ENCODE measurements at regions of chr4 and their contacts with region 1.

Region 1: DNA sequence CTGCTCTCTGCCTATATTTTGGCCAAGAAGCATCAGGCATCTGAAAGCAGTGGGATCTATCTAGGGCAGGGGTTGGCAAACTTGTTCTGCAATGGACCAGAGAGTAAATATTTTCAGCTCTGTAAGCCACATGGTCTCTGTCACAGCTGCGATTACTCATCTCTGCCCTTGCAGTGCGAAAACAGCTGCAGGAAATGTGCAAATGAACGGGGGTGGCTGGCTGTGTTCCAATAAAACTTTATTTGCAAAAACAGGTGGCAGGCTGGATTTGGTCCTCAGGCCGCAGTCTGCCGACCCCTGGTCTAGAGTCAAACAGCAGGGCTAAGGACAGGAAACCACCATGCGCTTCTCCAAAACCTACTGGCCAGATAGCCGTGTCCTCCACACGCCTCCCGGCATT is 48.6 kb downstream of the ACOX3 start:
- DNase-seq: peak; percentile 89
- ATAC-seq: peak; percentile 52
- H3K4me3 ChIP-seq: no peak overlapping the region
- H3K27ac ChIP-seq: no peak overlapping the region
- H3K4me1 ChIP-seq: peaks cover 22% of the 10 kb centered on the region
- H3K27me3 ChIP-seq: no peaks in the 10 kb centered on the region
- CTCF ChIP-seq: no peak
- POLR2A ChIP-seq: no peak
- RAD21 ChIP-seq: no peak

Region 2: DNA sequence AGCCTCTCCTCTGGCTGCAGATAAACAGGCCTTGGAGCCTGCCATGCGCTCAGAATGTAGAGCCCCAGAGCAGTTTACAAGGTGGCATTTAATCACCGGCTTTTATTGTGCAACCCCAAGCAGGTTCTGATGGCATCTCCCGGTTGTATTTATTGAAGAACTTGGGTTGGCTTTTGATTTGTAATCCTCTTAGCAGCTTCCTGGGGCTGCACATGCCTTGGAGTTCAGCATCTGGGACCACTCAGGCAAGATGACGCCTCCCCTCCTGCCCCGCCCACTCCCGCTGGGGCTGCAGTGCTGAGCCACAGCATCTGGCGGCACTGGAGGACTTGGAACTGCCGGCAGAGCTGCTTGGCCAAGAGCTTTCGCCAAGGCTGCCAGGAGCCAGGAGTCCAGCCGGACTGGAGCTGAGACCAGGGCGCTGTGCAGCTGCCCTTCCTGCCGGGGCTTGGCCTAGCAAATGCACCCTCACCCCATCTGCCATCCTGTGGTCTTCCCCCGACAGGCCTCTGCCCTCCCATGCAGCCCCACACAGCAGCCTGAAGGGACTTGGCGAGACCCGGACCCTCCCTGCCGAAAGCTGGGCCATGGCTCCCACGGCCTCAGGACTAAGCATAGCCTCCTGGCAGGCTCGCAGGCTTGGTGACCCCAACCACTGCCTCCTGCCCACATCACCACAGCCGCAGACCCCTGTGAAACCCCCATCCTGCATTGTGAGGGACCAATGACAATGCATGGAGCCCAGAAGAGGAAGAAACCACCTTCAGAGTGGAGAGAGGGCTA is 117.0 kb before region 1 on chr4:
- CTCF ChIA-PET with region 1: interaction called, 6 read pairs
- POLR2A ChIA-PET with region 1: no interaction called
- dilution Hi-C with region 1: no loop called
- in situ Hi-C with region 1: no loop called
- intact Hi-C with region 1: loop called (anchors 1 kb)
- DNase-seq: peak; percentile 93
- ATAC-seq: peak; percentile 77
- H3K4me3 ChIP-seq: no peak overlapping the region
- H3K27ac ChIP-seq: peak overlapping the region; percentile 36
- H3K4me1 ChIP-seq: peaks cover 41% of the 10 kb centered on the region
- H3K27me3 ChIP-seq: peaks cover 9% of the 10 kb centered on the region
- CTCF ChIP-seq: peak; percentile 76
- POLR2A ChIP-seq: no peak
- RAD21 ChIP-seq: peak; percentile 90

Region 3: DNA sequence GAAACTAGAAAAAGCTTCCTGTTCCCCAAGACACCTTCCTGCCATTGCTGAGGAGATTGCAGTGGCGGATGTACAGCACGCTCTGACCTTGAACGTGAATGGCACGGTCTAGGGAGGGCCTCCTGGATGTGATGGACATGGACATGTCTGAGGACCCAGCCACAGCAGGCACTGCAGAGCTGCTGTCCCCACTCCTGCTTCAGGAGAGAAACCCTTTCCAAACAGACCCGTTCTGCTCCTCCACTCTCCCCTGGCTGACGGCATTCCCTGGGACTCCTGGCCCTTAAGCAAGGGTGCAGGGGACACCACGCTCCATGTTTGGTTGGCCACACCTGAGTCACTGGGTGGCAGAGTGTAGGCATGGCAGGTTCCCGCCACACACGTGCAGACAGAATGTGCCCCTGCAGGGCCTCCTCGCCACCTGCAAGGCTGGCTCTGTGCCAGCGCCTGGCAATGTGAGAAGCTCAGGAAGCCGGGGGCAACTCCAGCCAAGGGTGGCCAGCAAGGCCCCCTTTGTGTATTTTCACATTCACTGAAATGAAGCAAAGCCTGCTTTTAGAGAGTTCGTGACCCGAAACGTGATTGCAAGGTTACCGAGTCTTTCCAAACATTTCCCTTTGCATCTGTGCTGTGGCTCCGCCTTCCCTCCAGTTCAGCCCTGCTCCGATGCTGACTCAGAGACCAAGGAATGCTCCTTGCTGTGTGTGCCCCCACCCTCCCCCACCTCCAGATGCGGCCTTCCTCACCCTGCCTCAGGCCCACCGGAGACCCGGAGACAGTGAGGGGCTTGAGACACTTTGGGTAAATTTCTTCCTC is 76.3 kb before region 1 on chr4:
- CTCF ChIA-PET with region 1: no interaction called
- POLR2A ChIA-PET with region 1: no interaction called
- dilution Hi-C with region 1: no loop called
- in situ Hi-C with region 1: no loop called
- intact Hi-C with region 1: loop called (anchors 1 kb)
- DNase-seq: peak; percentile 89
- ATAC-seq: peak; percentile 100
- H3K4me3 ChIP-seq: no peak overlapping the region
- H3K27ac ChIP-seq: peak overlapping the region; percentile 18; the same call in 1 of the 2 replicates
- H3K4me1 ChIP-seq: peaks cover 14% of the 10 kb centered on the region
- H3K27me3 ChIP-seq: no peaks in the 10 kb centered on the region
- CTCF ChIP-seq: no peak
- POLR2A ChIP-seq: no peak
- RAD21 ChIP-seq: peak; percentile 13; the same call in 1 of the 2 replicates

Region 4: DNA sequence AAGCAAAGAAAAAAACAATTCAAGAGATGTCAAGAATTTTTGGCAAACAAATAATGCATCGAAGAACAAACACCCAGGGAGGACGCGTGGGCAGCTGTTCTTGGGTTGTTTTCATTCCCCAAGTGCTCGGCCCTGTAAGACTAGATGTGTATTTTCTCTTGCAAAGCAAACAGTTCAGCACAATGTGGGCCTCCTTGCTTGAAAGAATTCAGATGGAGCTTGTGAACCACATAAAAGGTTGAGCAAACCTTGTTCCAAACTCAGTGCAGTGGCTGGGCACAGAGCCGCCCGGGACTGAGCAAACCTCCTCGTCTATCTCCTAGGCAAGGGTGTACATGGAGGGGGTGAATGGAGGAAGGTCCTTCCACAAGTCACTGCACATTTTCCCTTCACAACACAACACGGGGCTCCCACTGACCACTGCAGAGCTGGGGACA is 40.0 kb before region 1 on chr4:
- CTCF ChIA-PET with region 1: no interaction called
- POLR2A ChIA-PET with region 1: no interaction called
- dilution Hi-C with region 1: no loop called
- in situ Hi-C with region 1: no loop called
- intact Hi-C with region 1: loop called (anchors 2 kb)
- DNase-seq: peak; percentile 39
- ATAC-seq: peak; percentile 74
- H3K4me3 ChIP-seq: no peak overlapping the region
- H3K27ac ChIP-seq: peak overlapping the region; percentile 42; the same call in 1 of the 2 replicates
- H3K4me1 ChIP-seq: peaks cover 16% of the 10 kb centered on the region
- H3K27me3 ChIP-seq: peaks cover 19% of the 10 kb centered on the region
- CTCF ChIP-seq: no peak
- POLR2A ChIP-seq: no peak
- RAD21 ChIP-seq: no peak

Region 5: DNA sequence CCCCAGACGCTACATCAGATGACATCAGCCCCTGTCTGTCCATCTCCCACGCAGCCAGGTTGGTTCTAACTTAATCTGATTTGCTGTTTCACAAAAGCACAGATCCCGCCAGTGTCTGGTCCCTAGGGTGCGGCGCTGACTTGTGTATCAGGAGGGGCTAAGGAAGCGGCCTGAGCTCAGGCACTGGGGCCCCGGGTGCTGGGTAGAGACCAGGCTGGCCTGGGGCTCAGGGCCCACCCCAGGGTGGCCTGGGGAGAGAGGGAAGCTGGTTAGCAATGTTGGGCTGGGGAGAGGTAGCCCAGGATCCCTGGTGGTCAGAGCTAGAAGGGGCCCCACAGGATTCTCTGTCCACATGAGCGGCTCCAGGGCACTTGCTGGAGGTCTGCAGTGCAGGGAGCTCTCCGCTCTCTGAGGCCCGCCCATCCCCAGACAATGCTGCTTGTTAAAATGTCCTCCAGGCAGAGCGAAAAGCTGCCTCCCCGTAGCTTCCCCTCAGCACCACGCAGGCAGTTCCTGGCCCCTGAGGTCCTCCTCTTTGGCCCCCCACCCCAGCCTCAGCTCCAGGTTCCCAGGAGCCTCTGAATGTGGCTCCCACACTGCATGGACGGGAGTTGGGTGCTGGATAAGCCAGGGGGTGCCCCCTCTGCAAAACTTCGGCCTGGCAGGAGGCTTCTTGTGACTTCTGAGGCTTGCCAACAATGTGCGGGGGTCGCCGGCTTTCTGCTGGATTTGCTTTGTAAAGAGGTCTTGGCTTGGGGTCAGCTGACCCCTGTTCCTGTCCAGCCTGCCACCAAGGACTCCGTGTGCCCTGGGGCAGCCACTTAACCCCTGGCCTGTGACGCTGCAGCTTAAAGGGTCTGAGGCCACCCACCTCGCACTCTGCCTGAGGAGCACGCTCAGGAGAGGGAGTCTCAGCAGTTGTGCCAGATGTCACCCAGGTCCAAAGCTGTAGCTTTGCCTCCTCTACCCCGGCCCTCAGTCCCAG is 313.5 kb after region 1 on chr4:
- CTCF ChIA-PET with region 1: no interaction called
- POLR2A ChIA-PET with region 1: no interaction called
- dilution Hi-C with region 1: no loop called
- in situ Hi-C with region 1: no loop called
- intact Hi-C with region 1: no loop called
- DNase-seq: no peak
- ATAC-seq: no peak
- H3K4me3 ChIP-seq: no peak overlapping the region
- H3K27ac ChIP-seq: no peak overlapping the region
- H3K4me1 ChIP-seq: no peaks in the 10 kb centered on the region
- H3K27me3 ChIP-seq: peaks cover 5% of the 10 kb centered on the region; the same call in 1 of the 2 replicates
- CTCF ChIP-seq: no peak
- POLR2A ChIP-seq: no peak
- RAD21 ChIP-seq: no peak